ENCODE measurements at regions of chr1 and their contacts with region 1.

Region 1: DNA sequence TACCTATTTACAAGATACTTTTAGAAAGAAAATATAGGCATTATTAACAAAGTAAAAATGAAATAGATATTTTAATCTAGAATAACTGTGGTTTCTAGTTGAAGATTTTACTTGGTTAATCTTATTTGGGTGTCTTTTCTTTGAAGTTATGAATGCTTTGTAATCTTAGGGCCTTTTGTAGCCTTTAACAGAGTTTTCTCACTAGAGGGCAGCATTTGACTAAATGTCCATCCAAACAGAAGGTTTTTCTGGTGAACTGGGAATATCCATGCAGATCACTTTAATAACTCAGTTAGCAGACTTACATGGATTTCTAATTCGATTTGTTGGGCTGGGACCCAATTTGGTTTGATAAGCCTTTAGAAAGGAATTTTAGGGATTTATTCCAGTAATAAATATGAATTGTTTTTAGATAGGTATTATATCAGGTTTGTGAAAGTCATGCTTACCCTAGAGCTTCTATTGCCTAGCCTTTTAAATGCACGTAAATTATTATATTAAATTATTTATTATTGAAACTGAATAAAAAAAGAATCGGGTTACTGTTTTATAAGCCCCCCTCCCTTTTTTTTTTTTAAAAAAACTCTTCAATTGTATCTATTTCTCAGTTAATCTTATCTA is 119.7 kb downstream of the ZNF326 start:
- DNase-seq: no peak
- ATAC-seq: no peak
- H3K4me3 ChIP-seq: no peak overlapping the region
- H3K27ac ChIP-seq: no peak overlapping the region
- H3K4me1 ChIP-seq: no peaks in the 10 kb centered on the region
- H3K27me3 ChIP-seq: no peaks in the 10 kb centered on the region

Region 2: DNA sequence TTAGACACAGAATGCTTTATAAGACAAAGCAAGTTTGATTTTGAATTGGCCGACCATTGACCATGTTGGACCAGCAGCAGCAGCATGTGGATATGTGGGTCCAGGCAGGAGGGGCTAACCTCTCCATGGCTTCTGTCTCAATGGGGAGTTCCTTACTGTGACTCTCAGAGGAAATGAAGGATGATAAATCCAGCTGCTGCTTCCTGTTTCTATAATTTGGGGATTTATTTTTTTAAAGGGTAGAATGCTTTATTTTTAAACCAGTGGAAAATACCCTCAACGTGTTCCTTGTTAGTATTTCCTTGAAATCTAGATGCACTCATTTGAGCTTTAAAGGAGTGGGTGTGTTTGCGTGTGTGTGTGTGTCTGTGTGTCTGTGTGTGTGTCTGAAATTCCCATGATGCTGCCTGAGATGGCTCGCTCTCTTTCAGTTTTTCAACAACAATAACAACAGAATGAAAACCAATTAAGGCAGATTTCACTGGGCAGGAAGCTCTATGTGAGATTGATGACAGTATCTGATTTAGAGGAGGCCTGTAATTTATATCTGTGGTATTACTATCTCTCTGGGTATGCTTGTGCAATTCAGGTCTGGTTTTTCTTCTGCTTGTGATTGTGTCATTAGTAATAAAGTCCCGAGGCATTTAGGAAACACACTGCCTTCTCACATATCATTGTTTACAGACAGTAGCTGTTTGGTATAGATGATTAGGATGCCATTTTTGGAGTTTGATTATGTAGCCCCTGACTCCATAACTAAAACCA is 205.8 kb before region 1 on chr1:
- intact Hi-C with region 1: no loop called
- DNase-seq: no peak
- ATAC-seq: no peak
- H3K4me3 ChIP-seq: no peak overlapping the region
- H3K27ac ChIP-seq: no peak overlapping the region
- H3K4me1 ChIP-seq: peaks cover 0 to 4% of the 10 kb centered on the region in 2 donors
- H3K27me3 ChIP-seq: no peaks in the 10 kb centered on the region

Region 3: DNA sequence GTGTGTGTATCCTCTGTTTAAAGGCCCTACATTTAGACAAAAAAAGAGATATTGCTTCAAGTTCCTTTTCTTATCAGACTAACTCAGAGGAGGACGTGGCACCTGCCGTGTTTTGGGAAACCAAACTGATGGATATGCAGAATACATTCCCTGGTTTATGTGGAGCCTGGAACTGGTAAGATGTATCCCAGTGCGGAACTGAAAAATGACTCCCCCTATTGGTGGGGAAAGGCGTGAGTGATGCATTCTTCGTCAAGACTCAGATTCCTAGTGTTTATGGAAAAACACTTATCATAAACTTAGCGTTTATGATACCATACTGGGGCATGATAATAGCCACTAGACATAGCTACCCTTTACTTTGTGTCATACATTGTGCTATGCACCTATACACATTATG is 34.5 kb after region 1 on chr1:
- intact Hi-C with region 1: no loop called
- DNase-seq: no peak
- ATAC-seq: no peak
- H3K4me3 ChIP-seq: no peak overlapping the region
- H3K27ac ChIP-seq: no peak overlapping the region
- H3K4me1 ChIP-seq: no peaks in the 10 kb centered on the region
- H3K27me3 ChIP-seq: no peaks in the 10 kb centered on the region

Region 4: GRCh38 chr1:90175490-90176170 is 61.0 kb after region 1 on chr1:
- intact Hi-C with region 1: no loop called
- DNase-seq: no peak
- ATAC-seq: no peak
- H3K4me3 ChIP-seq: no peak overlapping the region
- H3K27ac ChIP-seq: no peak overlapping the region
- H3K4me1 ChIP-seq: peaks cover 0 to 3% of the 10 kb centered on the region in 2 donors
- H3K27me3 ChIP-seq: no peaks in the 10 kb centered on the region

Region 5: GRCh38 chr1:90964444-90965035 is 849.9 kb after region 1 on chr1:
- intact Hi-C with region 1: loop called in 1 of 2 experiments (anchors 5 kb)
- DNase-seq: no peak
- ATAC-seq: no peak
- H3K4me3 ChIP-seq: no peak overlapping the region
- H3K27ac ChIP-seq: no peak overlapping the region
- H3K4me1 ChIP-seq: peaks cover 0 to 2% of the 10 kb centered on the region in 2 donors
- H3K27me3 ChIP-seq: no peaks in the 10 kb centered on the region

Region 6: GRCh38 chr1:91165033-91165654 is 1050.5 kb after region 1 on chr1:
- intact Hi-C with region 1: loop called (anchors 5 kb)
- DNase-seq: peak; percentile 83 to 91
- ATAC-seq: peak; percentile 89
- H3K4me3 ChIP-seq: no peak overlapping the region
- H3K27ac ChIP-seq: no peak overlapping the region
- H3K4me1 ChIP-seq: no peaks in the 10 kb centered on the region
- H3K27me3 ChIP-seq: no peaks in the 10 kb centered on the region